ENCODE measurements at regions of chr9 and their contacts with region 1.

Region 1: DNA sequence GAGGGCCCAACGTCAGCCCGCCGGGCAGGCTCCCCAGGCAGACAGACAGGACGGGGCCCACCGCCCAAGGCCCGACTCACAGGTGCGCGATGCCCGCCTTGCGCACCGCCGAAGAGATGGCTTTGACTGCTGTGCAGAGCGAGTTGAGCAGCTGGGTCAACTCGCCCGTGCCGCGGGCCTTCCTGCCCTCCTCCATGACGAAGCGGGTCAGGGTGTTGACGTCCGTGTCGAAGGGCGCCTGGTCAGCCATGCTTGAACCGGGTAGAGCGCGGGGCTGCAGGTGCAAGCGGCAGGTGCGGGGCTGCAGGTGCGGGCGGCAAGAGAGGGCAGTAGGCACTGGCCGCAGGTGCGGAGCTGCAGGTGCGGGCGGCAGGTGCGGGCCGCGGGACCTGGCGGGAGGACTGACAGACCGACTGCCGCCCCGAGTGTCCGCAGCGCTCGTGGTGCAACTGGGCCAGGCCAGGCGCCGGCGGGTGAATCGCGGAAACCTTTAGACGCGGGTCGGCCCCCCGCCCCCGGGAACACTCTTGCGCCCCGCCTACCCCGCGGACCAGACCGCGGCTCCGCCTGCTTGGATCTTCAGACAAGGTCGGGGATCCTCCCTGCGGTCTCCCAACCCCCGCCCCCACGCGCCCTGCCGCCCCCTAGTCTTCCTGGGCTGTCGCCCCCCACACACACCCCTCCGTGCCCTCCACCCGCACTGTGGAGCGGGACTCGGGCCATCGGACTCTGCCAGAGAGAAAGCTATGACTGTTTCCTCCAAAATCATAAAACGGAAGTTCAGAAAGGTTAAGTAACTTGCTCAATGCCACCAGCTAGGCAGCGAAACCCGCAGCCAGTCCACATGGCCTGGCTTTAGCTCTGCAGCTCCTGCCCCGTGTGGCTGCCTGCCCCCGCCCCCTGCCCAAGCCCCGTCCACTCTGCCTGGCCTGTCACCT is at the start of gene FBP1:
- DNase-seq: peak in 13 of 14 experiments; percentile 13 to 60 (median 35)
- ATAC-seq: peak; percentile 62
- H3K4me3 ChIP-seq: peak within 1 kb of the TSS; percentile 72
- H3K4me3 Mint-ChIP-seq: peak within 1 kb of the TSS; percentile 91
- H3K27ac ChIP-seq: peak within 1 kb of the TSS in 1 of 2 donors; percentile 22
- H3K27ac Mint-ChIP-seq: peak within 1 kb of the TSS; percentile 70
- H3K4me1 ChIP-seq: peaks cover 15% of the 10 kb centered on the region
- H3K4me1 Mint-ChIP-seq: peaks cover 17% of the 10 kb centered on the region
- H3K27me3 ChIP-seq: no peaks in the 10 kb centered on the region
- H3K27me3 Mint-ChIP-seq: no peaks in the 10 kb centered on the region
- CTCF ChIP-seq: no peak
- total RNA-seq, gene FBP1: 3.0 to 3.6 TPM

Region 2: DNA sequence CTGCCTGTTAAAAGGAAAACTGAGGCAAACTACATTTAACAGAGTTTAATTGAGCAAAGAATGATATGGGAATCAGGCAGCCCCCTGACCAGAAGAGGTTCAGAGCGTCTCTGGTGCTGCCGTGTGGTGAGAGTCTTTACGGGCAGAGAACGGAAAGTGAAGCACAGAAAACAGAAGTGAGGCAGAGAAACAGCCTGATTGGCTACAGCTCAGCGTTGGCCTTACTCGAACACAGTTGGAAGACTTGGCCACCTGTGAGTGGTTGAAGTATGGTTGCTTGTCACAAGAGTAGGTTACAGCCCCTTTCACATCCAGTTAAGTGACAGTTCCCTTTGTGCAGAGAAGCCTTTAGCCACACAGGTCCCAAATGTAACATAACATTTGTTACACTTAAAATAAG is 16.9 kb after region 1 on chr9:
- CTCF ChIA-PET with region 1: no interaction called
- POLR2A ChIA-PET with region 1: interaction called, 17 read pairs
- intact Hi-C with region 1: no loop called
- DNase-seq: peak in 10 of 14 experiments; percentile 5 to 73 (median 34)
- ATAC-seq: peak; percentile 98
- H3K4me3 ChIP-seq: peak overlapping the region; percentile 46
- H3K4me3 Mint-ChIP-seq: peak overlapping the region; percentile 52
- H3K27ac ChIP-seq: no peak overlapping the region
- H3K27ac Mint-ChIP-seq: peak overlapping the region; percentile 57
- H3K4me1 ChIP-seq: peaks cover 24% of the 10 kb centered on the region
- H3K4me1 Mint-ChIP-seq: peaks cover 15% of the 10 kb centered on the region
- H3K27me3 ChIP-seq: no peaks in the 10 kb centered on the region
- H3K27me3 Mint-ChIP-seq: no peaks in the 10 kb centered on the region
- CTCF ChIP-seq: no peak